PC-9 (cell line): ENCODE measurements at regions of chr4 and their contacts with region 1.

Region 1: DNA sequence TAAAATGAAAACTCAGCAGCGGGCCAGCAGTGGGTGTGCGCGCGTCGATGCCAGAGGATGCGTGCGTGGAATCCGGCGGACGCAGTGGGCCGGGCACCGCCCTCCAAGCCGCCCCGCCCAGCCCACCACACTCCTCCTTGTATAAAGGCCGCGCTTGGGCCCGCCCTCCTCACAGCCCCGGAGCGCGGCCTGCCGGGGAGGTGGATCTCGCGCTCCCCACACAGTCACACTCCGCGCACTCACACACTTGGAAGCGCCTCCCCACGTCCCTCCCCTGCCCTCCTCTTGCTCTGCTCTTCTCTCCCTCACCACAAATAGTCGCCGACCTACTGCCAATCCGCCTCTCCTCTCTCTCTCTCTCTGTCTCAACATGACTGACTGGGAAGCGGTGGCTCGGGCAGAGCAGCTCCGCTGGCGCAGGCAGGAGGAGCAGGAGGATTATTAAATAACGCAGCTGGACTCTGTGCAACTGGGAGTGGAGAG is at the start of gene CCSER1:
- DNase-seq: peak; percentile 46 to 66
- H3K4me3 ChIP-seq: peak within 1 kb of the TSS; percentile 63
- H3K27ac ChIP-seq: peak within 1 kb of the TSS; percentile 66
- H3K4me1 ChIP-seq: no peaks in the 10 kb centered on the region
- H3K27me3 ChIP-seq: no peaks in the 10 kb centered on the region
- CTCF ChIP-seq: no peak
- total RNA-seq, gene CCSER1: 4.1 and 5.9 TPM in 2 replicates

Region 2: DNA sequence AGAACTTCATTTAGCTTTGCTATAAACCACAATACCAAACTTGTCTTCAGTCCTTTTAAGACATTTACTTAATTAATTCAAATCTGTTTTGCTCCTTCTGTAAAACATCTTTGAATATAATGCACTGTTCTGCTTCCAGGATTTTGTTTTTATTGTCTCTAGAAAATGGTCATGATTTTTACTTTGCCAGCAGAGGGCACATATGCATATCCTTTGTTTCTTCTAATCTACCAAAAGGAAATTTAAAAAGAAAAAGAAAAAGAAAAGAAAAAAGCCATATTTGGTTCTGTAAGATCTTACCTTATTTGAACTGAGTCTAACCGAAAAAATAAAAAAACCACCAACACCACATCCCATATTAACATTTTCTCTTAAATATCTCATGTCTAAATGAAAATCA is 102.0 kb before region 1 on chr4:
- CTCF ChIA-PET with region 1: no interaction called
- POLR2A ChIA-PET with region 1: no interaction called
- intact Hi-C with region 1: loop called (anchors 5 kb)
- DNase-seq: no peak
- H3K4me3 ChIP-seq: no peak overlapping the region
- H3K27ac ChIP-seq: no peak overlapping the region
- H3K4me1 ChIP-seq: no peaks in the 10 kb centered on the region
- H3K27me3 ChIP-seq: no peaks in the 10 kb centered on the region
- CTCF ChIP-seq: peak; percentile 52

Region 3: GRCh38 chr4:90104001-90104400 is 23.3 kb before region 1 on chr4:
- CTCF ChIA-PET with region 1: no interaction called
- POLR2A ChIA-PET with region 1: no interaction called
- intact Hi-C with region 1: no loop called
- DNase-seq: no peak
- H3K4me3 ChIP-seq: no peak overlapping the region
- H3K27ac ChIP-seq: no peak overlapping the region
- H3K4me1 ChIP-seq: no peaks in the 10 kb centered on the region
- H3K27me3 ChIP-seq: no peaks in the 10 kb centered on the region
- CTCF ChIP-seq: no peak